Gastrocnemius medialis (tissue), 4 donors: ENCODE measurements at regions of chr5 and their contacts with region 1.

Region 1: GRCh38 chr5:180784497-180785097 is 18.0 kb downstream of the MGAT1 start:
- DNase-seq: peak; percentile 57 to 76
- ATAC-seq: peak; percentile 82 to 86
- H3K4me3 ChIP-seq: peak overlapping the region in 1 of 4 donors; percentile 21
- H3K27ac ChIP-seq: peak overlapping the region in 3 of 4 donors; percentile 62 to 73 (median 65)
- H3K4me1 ChIP-seq: peaks cover 21 to 31% of the 10 kb centered on the region in 2 donors
- H3K27me3 ChIP-seq: no peaks in the 10 kb centered on the region
- CTCF ChIP-seq: peak; percentile 42 to 82 (median 67)
- POLR2A ChIP-seq: no peak

Region 2: DNA sequence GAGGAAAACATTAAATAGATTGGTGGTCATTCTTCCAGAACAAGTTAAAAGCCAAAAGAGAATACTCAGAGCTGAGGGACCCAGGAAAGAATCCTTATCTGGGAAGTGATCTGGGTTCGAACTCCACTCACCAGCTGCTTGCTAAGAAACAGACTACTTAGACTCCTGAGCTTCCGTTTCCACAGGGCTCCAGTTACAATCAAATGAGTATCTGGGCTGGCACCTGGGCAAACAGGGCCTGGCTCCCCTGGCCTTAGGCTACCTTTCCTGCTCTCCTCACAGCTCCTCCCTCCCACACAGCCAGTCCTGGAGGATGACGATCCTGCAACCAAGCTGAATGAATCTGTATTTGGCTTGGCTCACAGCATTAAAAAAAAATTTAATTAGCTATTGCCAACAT is 495.2 kb before region 1 on chr5:
- in situ Hi-C with region 1: no loop called
- intact Hi-C with region 1: no loop called
- DNase-seq: no peak
- ATAC-seq: no peak
- H3K4me3 ChIP-seq: no peak overlapping the region
- H3K27ac ChIP-seq: no peak overlapping the region
- H3K4me1 ChIP-seq: peaks cover 15% of the 10 kb centered on the region in 2 donors
- H3K27me3 ChIP-seq: no peaks in the 10 kb centered on the region
- CTCF ChIP-seq: no peak
- POLR2A ChIP-seq: no peak

Region 3: GRCh38 chr5:180648641-180649296 is 135.8 kb before region 1 on chr5:
- in situ Hi-C with region 1: no loop called
- intact Hi-C with region 1: no loop called
- DNase-seq: no peak
- ATAC-seq: no peak
- H3K4me3 ChIP-seq: peak overlapping the region; percentile 31 to 52 (median 42)
- H3K27ac ChIP-seq: peak overlapping the region in 2 of 4 donors; percentile 48 to 52
- H3K4me1 ChIP-seq: no peaks in the 10 kb centered on the region
- H3K27me3 ChIP-seq: peaks cover 26 to 51% (median 42%) of the 10 kb centered on the region in 3 donors
- CTCF ChIP-seq: peak in 2 of 5 experiments; percentile 12 to 20
- POLR2A ChIP-seq: no peak

Region 4: GRCh38 chr5:180868960-180869359 is 84.4 kb after region 1 on chr5:
- in situ Hi-C with region 1: loop called in 1 of 4 experiments (anchors 5 kb)
- intact Hi-C with region 1: loop called (anchors 2 kb)
- DNase-seq: peak; percentile 49 to 73
- ATAC-seq: peak; percentile 78 to 82
- H3K4me3 ChIP-seq: no peak overlapping the region
- H3K27ac ChIP-seq: no peak overlapping the region
- H3K4me1 ChIP-seq: no peaks in the 10 kb centered on the region
- H3K27me3 ChIP-seq: no peaks in the 10 kb centered on the region
- CTCF ChIP-seq: peak; percentile 43 to 76 (median 58)
- POLR2A ChIP-seq: no peak

Region 5: DNA sequence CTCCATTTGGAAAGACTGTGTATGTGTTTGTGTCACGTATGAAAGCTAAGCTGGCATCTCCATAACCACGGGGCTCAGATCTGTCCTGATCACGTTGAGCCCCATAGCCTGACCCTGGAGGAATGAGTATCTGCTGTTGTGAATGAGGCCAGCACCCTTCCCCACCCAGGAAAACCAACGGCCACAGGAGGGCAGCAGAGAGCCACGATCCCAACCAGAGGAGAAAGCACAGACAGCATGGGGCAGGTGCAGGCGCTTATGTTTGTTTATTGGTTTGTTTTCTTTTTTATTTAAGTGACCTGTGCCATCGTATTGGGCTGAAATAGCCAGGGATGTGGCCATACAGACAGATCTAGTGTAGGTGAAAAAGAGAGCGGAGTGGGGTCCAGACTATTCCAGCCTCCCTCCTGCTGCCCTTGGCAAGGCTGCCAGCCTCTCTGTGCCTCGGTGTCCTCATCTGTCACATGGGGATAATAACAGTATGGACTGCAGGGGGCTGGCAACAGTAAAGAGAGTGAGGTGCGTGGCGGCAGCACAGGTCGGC is 374.8 kb after region 1 on chr5:
- in situ Hi-C with region 1: loop called in 1 of 4 experiments (anchors 10 kb)
- intact Hi-C with region 1: loop called (anchors 10 kb)
- DNase-seq: peak; percentile 57 to 74
- ATAC-seq: peak; percentile 93 to 95
- H3K4me3 ChIP-seq: no peak overlapping the region
- H3K27ac ChIP-seq: peak overlapping the region in 1 of 4 donors; percentile 72
- H3K4me1 ChIP-seq: no peaks in the 10 kb centered on the region
- H3K27me3 ChIP-seq: peaks cover 0 to 2% (median 1%) of the 10 kb centered on the region in 3 donors
- CTCF ChIP-seq: peak; percentile 60 to 91 (median 81)
- POLR2A ChIP-seq: no peak